ENCODE measurements at regions of chr5 and their contacts with region 1.

Region 1: DNA sequence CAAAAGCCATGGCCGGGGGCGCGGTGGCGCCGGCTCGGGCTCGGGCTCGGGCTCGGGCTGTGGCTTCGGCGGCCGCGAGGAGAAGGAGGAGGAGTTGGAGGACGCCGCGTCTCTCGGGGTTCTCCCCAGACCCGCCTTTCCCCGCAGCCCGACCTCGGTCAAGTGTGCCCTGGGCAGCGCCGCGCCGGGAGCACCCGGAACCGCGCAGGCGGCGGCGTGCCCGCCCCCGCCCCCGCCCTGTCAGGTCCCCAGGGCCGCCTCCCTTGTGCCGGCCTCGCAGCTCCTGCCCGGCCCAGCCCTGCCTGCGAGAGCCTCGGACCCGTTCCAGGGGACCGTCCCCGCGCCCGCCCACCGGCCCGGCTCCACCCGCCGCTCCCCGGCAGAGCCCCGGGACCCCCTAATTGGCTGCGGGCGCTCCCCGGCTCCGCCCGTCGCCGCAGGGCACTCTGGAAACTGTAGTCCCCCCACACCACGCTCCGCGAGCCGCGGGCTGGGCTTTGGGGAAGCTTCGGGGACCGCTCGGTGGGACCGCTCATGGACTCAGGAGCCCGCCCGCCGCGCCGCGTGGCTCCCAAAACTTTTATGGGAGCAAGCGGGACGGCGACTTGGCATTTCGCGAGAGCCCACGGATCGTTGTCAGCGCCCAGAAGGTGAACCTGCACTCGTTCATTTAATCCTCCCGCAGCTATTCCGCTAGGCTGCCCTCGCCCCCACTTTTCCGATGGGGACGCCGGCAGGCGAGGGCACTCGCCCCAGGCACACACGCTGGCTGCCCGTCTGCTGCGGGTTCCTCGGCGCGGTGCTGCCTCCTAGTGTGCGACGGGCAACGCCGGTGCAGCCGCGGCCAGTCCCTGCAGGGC is at the start of gene STK10:
- DNase-seq: peak; percentile 85 to 91 (median 88)
- ATAC-seq: peak; percentile 90
- H3K4me3 ChIP-seq: peak within 1 kb of the TSS; percentile 60
- H3K27ac ChIP-seq: no peak within 1 kb of the TSS; the same call in 2 of the 3 replicates
- H3K4me1 ChIP-seq: peaks cover 7 to 19% of the 10 kb centered on the region in 2 experiments; a peak in 3 of 5 replicates
- H3K27me3 ChIP-seq: no peaks in the 10 kb centered on the region
- CTCF ChIP-seq: peak; percentile 91 to 94 (median 94)
- EP300 ChIP-seq: no peak
- POLR2A ChIP-seq: peak; percentile 52
- RAD21 ChIP-seq: peak; percentile 98 to 99
- polyA plus RNA-seq, gene STK10: 0.30 to 0.55 TPM

Region 2: GRCh38 chr5:172059661-172060100 is 128.6 kb before region 1 on chr5:
- CTCF ChIA-PET with region 1: no interaction called
- POLR2A ChIA-PET with region 1: no interaction called
- in situ Hi-C with region 1: no loop called
- intact Hi-C with region 1: loop called (anchors 5 kb)
- DNase-seq: peak; percentile 38 to 51 (median 51)
- ATAC-seq: peak; percentile 84
- H3K4me3 ChIP-seq: no peak overlapping the region
- H3K27ac ChIP-seq: no peak overlapping the region
- H3K4me1 ChIP-seq: peaks cover 0 to 7% of the 10 kb centered on the region in 2 experiments; a peak in 3 of 5 replicates
- H3K27me3 ChIP-seq: peaks cover 0 to 7% of the 10 kb centered on the region in 2 experiments; a peak in 1 of 5 replicates
- CTCF ChIP-seq: peak; percentile 70 to 82 (median 78)
- EP300 ChIP-seq: no peak
- POLR2A ChIP-seq: no peak
- RAD21 ChIP-seq: peak; percentile 65 to 82

Region 3: GRCh38 chr5:172144291-172144815 is 43.9 kb before region 1 on chr5:
- CTCF ChIA-PET with region 1: no interaction called
- POLR2A ChIA-PET with region 1: no interaction called
- in situ Hi-C with region 1: no loop called
- intact Hi-C with region 1: loop called (anchors 5 kb)
- DNase-seq: peak; percentile 72 to 91 (median 78)
- ATAC-seq: peak; percentile 88
- H3K4me3 ChIP-seq: no peak overlapping the region
- H3K27ac ChIP-seq: peak overlapping the region; percentile 67
- H3K4me1 ChIP-seq: peaks cover 53 to 56% of the 10 kb centered on the region in 2 experiments; a peak in 4 of 5 replicates
- H3K27me3 ChIP-seq: no peaks in the 10 kb centered on the region
- CTCF ChIP-seq: peak in 1 of 3 experiments; percentile 10; a peak in 1 of 6 replicates
- EP300 ChIP-seq: peak; percentile 79
- POLR2A ChIP-seq: no peak
- RAD21 ChIP-seq: no peak